ENCODE measurements at regions of chr20 and their contacts with region 1.

Region 1: DNA sequence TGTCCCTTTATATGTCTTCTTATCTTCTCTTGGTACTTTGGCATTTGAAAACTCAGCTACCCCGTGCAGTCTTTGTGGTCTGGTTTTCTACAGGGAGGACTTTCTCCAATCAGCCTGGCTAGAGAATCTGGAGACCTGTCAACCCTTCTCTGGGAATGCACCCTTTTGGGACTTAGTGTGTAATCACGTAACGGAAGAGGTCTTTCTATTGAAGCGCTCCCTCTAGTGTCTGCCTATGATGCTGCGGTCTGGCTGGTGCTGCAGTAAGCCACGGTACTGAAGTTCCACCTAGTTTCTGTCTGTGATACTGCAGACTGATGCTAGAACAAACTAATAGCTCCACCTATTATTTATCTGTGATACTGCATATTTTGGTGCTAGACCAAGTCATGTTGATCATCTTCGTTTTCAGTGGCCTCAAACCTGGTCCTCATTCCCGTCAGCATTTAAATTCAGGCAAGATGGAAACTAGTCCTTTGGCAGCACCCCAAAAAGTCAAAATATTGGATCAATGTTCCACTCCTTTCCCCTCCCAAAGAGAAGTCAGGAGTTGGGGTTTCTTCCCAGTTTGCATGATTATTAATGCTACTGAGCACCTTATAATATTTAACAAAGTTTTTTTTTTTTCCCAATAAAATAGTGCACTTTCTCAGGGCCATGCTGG is 12.5 kb upstream of the SIRPB2 start:
- DNase-seq: peak; percentile 87
- ATAC-seq: peak; percentile 100
- H3K4me3 Mint-ChIP-seq: no peak overlapping the region
- H3K27ac Mint-ChIP-seq: no peak overlapping the region
- H3K4me1 Mint-ChIP-seq: peaks cover 3% of the 10 kb centered on the region
- H3K27me3 Mint-ChIP-seq: peaks cover 49% of the 10 kb centered on the region

Region 2: GRCh38 chr20:1241456-1241855 is 262.2 kb before region 1 on chr20:
- CTCF ChIA-PET with region 1: no interaction called
- POLR2A ChIA-PET with region 1: no interaction called
- DNase-seq: no peak
- ATAC-seq: no peak
- H3K4me3 Mint-ChIP-seq: no peak overlapping the region
- H3K27ac Mint-ChIP-seq: no peak overlapping the region
- H3K4me1 Mint-ChIP-seq: peaks cover 9% of the 10 kb centered on the region
- H3K27me3 Mint-ChIP-seq: peaks cover 22% of the 10 kb centered on the region

Region 3: GRCh38 chr20:1299522-1299921 is 204.2 kb before region 1 on chr20:
- CTCF ChIA-PET with region 1: interaction called, 16 read pairs
- POLR2A ChIA-PET with region 1: no interaction called
- DNase-seq: peak; percentile 49
- ATAC-seq: peak; percentile 26
- H3K4me3 Mint-ChIP-seq: peak overlapping the region; percentile 43
- H3K27ac Mint-ChIP-seq: peak overlapping the region; percentile 92
- H3K4me1 Mint-ChIP-seq: peaks cover 32% of the 10 kb centered on the region
- H3K27me3 Mint-ChIP-seq: no peaks in the 10 kb centered on the region

Region 4: GRCh38 chr20:1437235-1437904 is 66.3 kb before region 1 on chr20:
- CTCF ChIA-PET with region 1: interaction called, 45 read pairs
- POLR2A ChIA-PET with region 1: no interaction called
- DNase-seq: peak; percentile 87
- ATAC-seq: no peak
- H3K4me3 Mint-ChIP-seq: no peak overlapping the region
- H3K27ac Mint-ChIP-seq: no peak overlapping the region
- H3K4me1 Mint-ChIP-seq: peaks cover 39% of the 10 kb centered on the region
- H3K27me3 Mint-ChIP-seq: peaks cover 20% of the 10 kb centered on the region

Region 5: DNA sequence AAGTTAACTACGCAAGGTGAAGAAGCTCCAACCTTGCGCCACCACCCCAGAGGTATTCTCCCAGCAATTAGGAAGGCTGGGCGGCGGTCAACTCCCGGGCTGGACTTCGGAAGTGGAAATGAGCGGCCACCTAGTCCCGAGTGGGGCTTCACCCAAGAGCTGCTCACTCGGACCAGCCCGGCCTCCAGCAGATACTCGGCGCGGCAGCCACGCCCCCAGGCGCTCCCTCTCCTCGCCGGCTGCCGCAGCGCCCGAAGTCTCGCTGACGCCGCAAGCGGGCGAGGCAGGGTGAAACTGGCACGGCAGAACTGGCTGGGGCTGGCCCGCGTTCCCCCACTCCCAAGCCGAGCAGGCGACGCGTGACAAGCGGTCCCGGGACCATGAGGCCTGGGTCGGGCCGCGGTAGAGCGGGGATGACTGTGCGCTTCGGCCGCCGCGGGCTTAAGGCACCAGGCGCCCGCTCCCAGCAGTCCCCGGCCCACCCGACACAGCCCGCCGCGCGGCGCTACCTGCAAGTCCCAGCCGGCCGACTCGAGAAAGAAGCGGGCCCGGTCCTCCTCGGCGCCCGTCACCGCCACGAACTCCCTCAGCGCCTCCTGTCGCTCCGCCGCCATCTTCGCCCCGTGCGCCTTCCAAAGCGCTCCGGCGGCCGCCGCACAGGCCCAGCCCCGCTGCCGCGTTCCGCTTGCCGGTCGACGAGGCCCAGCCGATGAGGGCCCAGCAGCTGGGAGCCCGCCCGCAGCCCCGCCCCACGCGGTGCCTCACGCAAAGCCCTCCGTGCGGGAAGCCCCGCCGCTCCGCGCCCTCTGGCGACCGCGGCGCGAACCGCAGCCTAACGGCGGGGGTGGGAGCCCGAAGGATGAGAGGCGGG is 37.2 kb before region 1 on chr20 and contains the start of gene NSFL1C:
- CTCF ChIA-PET with region 1: interaction called, 48 read pairs
- POLR2A ChIA-PET with region 1: interaction called, 3 read pairs
- DNase-seq: peak; percentile 96
- ATAC-seq: peak; percentile 97
- H3K4me3 Mint-ChIP-seq: peak within 1 kb of the TSS; percentile 81
- H3K27ac Mint-ChIP-seq: peak within 1 kb of the TSS; percentile 75
- H3K4me1 Mint-ChIP-seq: peaks cover 45% of the 10 kb centered on the region
- H3K27me3 Mint-ChIP-seq: peaks cover 17% of the 10 kb centered on the region
- total RNA-seq, gene NSFL1C: 60.5 to 67.8 TPM

Region 6: GRCh38 chr20:1491281-1491840 is 12.3 kb before region 1 on chr20 and contains the start of gene SIRPB2:
- CTCF ChIA-PET with region 1: interaction called, 37 read pairs
- POLR2A ChIA-PET with region 1: no interaction called
- DNase-seq: no peak
- ATAC-seq: no peak
- H3K4me3 Mint-ChIP-seq: no peak within 1 kb of the TSS
- H3K27ac Mint-ChIP-seq: no peak within 1 kb of the TSS
- H3K4me1 Mint-ChIP-seq: peaks cover 27% of the 10 kb centered on the region
- H3K27me3 Mint-ChIP-seq: peaks cover 51% of the 10 kb centered on the region
- total RNA-seq, gene SIRPB2: not detected

Region 7: GRCh38 chr20:1734269-1734858 is 230.7 kb after region 1 on chr20:
- CTCF ChIA-PET with region 1: interaction called, 44 read pairs
- POLR2A ChIA-PET with region 1: no interaction called
- DNase-seq: peak; percentile 62
- ATAC-seq: peak; percentile 88
- H3K4me3 Mint-ChIP-seq: no peak overlapping the region
- H3K27ac Mint-ChIP-seq: no peak overlapping the region
- H3K4me1 Mint-ChIP-seq: peaks cover 37% of the 10 kb centered on the region
- H3K27me3 Mint-ChIP-seq: no peaks in the 10 kb centered on the region

Region 8: DNA sequence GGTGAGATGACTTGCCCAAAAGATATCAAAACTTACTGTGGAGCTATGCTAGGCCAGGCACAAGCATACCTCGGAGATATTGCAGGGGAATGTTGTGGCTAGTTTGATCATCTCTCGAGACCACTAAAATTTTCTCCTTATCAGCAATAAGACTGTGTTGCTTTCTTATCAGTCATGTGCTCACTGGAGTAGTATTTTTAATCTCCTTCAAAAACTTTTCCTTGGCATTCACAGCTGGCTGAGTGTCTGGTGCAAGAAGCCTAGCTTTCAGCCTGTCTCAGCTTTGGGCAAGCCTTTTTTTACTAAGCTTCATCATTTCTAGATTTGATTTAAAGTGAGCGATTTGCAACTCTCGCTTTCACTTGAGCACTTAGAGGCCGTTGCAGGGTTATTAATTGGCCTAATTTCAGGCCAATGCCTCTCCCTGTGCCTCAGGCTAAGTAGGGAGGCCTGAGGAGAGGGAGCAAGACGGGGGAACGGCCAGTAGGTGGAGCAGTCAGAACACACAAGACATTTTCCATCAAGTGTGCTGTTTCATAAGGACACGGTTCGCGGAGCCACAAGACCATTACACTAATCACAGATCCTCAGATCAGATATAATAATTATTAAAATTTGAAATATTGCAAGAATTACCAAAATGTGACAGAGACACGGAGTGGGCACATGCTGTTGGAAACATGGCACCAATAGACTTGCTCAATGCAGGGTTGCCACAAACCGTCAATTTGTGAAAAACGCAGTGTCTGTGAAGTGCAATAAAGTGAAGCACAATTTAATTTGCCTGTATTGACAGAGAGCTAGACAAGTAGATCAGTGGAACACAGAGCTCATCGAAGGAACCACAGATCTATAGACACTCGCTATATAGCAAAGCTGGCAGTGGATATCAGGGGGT is 260.7 kb after region 1 on chr20:
- CTCF ChIA-PET with region 1: interaction called, 23 read pairs
- POLR2A ChIA-PET with region 1: no interaction called
- DNase-seq: peak; percentile 77
- ATAC-seq: peak; percentile 95
- H3K4me3 Mint-ChIP-seq: no peak overlapping the region
- H3K27ac Mint-ChIP-seq: no peak overlapping the region
- H3K4me1 Mint-ChIP-seq: no peaks in the 10 kb centered on the region
- H3K27me3 Mint-ChIP-seq: peaks cover 16% of the 10 kb centered on the region